Heart right ventricle (tissue), 16 donors: ENCODE measurements at regions of chr11 and their contacts with region 1.

Region 1: DNA sequence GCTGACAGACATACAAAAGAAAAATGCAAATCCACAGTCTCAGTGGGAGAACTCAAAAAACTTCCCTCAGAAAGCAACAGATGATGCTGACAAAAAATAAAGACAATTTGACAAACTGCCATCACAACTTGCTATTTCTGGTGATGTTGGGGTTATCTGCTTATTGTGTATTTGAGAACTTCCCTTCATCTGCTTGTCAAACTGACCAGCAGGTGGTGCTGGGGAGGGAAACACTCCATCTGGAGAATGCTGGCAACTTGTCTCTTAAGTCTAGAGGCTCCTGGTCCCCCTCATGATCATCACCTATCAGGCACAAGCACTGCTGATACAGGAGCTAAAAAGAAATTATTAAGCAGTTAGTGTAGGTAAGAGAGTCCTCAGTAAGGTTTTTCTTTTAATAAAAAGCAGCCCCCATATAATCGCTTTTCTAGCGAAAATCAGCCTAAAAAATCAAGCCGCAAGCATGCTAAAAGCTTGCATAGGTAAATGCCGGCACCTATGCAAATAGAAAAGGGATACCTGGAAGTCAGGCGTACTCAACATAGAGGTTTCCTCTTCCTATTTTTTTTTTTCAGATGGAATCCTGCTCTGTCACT is 9.8 kb upstream of the FAM111B start:
- DNase-seq: peak; percentile 23 to 54
- ATAC-seq: peak in 1 of 8 donors; percentile 46
- H3K4me3 ChIP-seq: no peak overlapping the region
- H3K27ac ChIP-seq: no peak overlapping the region
- H3K4me1 ChIP-seq: peaks cover 0 to 6% (median 0%) of the 10 kb centered on the region in 9 donors
- H3K27me3 ChIP-seq: peaks cover 0 to 45% (median 22%) of the 10 kb centered on the region in 7 donors
- CTCF ChIP-seq: peak; percentile 41 to 74 (median 67)

Region 2: GRCh38 chr11:59135648-59136461 is 38.6 kb after region 1 on chr11:
- intact Hi-C with region 1: loop called in 4 of 10 experiments (anchors 2 to 5 kb)
- DNase-seq: peak; percentile 74 to 81
- ATAC-seq: peak; percentile 83 to 97 (median 94)
- H3K4me3 ChIP-seq: peak overlapping the region in 2 of 10 donors; percentile 12 to 13
- H3K27ac ChIP-seq: no peak overlapping the region
- H3K4me1 ChIP-seq: peaks cover 0 to 8% (median 0%) of the 10 kb centered on the region in 9 donors
- H3K27me3 ChIP-seq: no peaks in the 10 kb centered on the region
- CTCF ChIP-seq: peak; percentile 92 to 99 (median 97)

Region 3: DNA sequence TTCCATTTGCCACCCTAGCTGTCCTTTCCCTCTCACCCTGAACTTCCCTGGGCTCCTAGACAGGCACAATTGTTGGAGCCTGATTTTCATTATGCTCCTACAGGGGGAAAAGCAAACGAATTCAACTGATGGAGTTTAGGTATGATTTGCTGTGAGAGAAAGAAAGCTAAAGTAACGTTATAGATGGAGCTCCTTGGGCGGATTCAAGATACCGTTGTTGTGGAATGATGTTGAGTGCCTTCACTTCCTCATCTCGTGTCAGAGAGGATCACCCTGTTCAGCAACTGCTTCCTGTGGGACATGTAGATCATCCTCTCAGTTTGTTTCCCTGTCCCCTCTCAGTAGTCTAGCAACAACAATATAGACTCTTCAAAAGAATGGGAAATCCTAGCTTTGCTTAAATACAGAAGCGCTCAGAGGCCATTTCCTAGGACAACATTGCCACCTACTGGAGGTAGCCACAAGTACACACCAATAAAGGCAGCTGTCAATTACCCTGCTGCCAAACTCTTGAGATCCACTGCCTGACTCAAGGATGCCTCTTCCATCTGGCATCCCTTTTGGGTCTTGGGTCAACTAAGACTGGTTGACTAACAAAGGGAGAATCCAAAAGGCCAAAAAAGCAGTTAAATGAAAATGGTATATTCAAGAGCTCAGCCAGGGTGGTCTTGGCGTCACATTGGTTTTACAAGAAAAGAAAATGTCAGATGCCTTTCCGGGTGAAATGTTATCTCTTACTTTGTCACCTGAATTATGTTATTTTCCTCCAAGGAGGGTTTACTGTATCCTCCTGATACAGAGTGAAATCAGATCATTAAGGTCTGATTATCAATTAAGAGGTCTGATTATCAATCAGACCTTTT is 61.2 kb after region 1 on chr11:
- intact Hi-C with region 1: loop called in 4 of 10 experiments (anchors 5 to 10 kb)
- DNase-seq: peak in 1 of 2 donors; percentile 54
- ATAC-seq: peak; percentile 55 to 92 (median 88)
- H3K4me3 ChIP-seq: no peak overlapping the region
- H3K27ac ChIP-seq: no peak overlapping the region
- H3K4me1 ChIP-seq: peaks cover 0 to 10% (median 0%) of the 10 kb centered on the region in 9 donors
- H3K27me3 ChIP-seq: peaks cover 0 to 5% (median 0%) of the 10 kb centered on the region in 7 donors
- CTCF ChIP-seq: peak; percentile 60 to 88 (median 81)